MCF 10A (cell line): ENCODE measurements at regions of chr2 and their contacts with region 1.

Region 1: GRCh38 chr2:176096986-176097819 is 2.4 kb upstream of the HOXD12 start:
- DNase-seq: peak; percentile 89
- H3K4me3 Mint-ChIP-seq: peak overlapping the region; percentile 77
- H3K27ac Mint-ChIP-seq: peak overlapping the region; percentile 71
- H3K4me1 Mint-ChIP-seq: peaks cover 13% of the 10 kb centered on the region
- H3K27me3 Mint-ChIP-seq: peaks cover 47% of the 10 kb centered on the region
- CTCF ChIP-seq: peak; percentile 92

Region 2: GRCh38 chr2:175030380-175031271 is 1066.6 kb before region 1 on chr2:
- CTCF ChIA-PET with region 1: interaction called, 9 read pairs
- POLR2A ChIA-PET with region 1: no interaction called
- intact Hi-C with region 1: loop called (anchors 5 kb)
- DNase-seq: peak; percentile 49
- H3K4me3 Mint-ChIP-seq: no peak overlapping the region
- H3K27ac Mint-ChIP-seq: no peak overlapping the region
- H3K4me1 Mint-ChIP-seq: no peaks in the 10 kb centered on the region
- H3K27me3 Mint-ChIP-seq: no peaks in the 10 kb centered on the region
- CTCF ChIP-seq: peak; percentile 28

Region 3: GRCh38 chr2:175251425-175252041 is 845.7 kb before region 1 on chr2:
- CTCF ChIA-PET with region 1: interaction called, 43 read pairs
- POLR2A ChIA-PET with region 1: interaction called, 5 read pairs
- intact Hi-C with region 1: loop called (anchors 1 kb)
- DNase-seq: peak; percentile 63
- H3K4me3 Mint-ChIP-seq: no peak overlapping the region
- H3K27ac Mint-ChIP-seq: no peak overlapping the region
- H3K4me1 Mint-ChIP-seq: no peaks in the 10 kb centered on the region
- H3K27me3 Mint-ChIP-seq: peaks cover 56% of the 10 kb centered on the region
- CTCF ChIP-seq: peak; percentile 48

Region 4: GRCh38 chr2:175366815-175367214 is 730.4 kb before region 1 on chr2:
- CTCF ChIA-PET with region 1: interaction called, 38 read pairs
- POLR2A ChIA-PET with region 1: interaction called, 4 read pairs
- intact Hi-C with region 1: loop called (anchors 1 kb)
- DNase-seq: peak; percentile 68
- H3K4me3 Mint-ChIP-seq: no peak overlapping the region
- H3K27ac Mint-ChIP-seq: no peak overlapping the region
- H3K4me1 Mint-ChIP-seq: no peaks in the 10 kb centered on the region
- H3K27me3 Mint-ChIP-seq: peaks cover 49% of the 10 kb centered on the region
- CTCF ChIP-seq: peak; percentile 73

Region 5: GRCh38 chr2:175621821-175622220 is 475.4 kb before region 1 on chr2:
- CTCF ChIA-PET with region 1: no interaction called
- POLR2A ChIA-PET with region 1: no interaction called
- intact Hi-C with region 1: no loop called
- DNase-seq: peak; percentile 2
- H3K4me3 Mint-ChIP-seq: no peak overlapping the region
- H3K27ac Mint-ChIP-seq: no peak overlapping the region
- H3K4me1 Mint-ChIP-seq: no peaks in the 10 kb centered on the region
- H3K27me3 Mint-ChIP-seq: peaks cover 9% of the 10 kb centered on the region
- CTCF ChIP-seq: no peak

Region 6: GRCh38 chr2:175690113-175690837 is 406.9 kb before region 1 on chr2:
- CTCF ChIA-PET with region 1: interaction called, 30 read pairs
- POLR2A ChIA-PET with region 1: interaction called, 4 read pairs
- intact Hi-C with region 1: loop called (anchors 2 kb)
- DNase-seq: peak; percentile 74
- H3K4me3 Mint-ChIP-seq: no peak overlapping the region
- H3K27ac Mint-ChIP-seq: no peak overlapping the region
- H3K4me1 Mint-ChIP-seq: no peaks in the 10 kb centered on the region
- H3K27me3 Mint-ChIP-seq: peaks cover 44% of the 10 kb centered on the region
- CTCF ChIP-seq: peak; percentile 57

Region 7: GRCh38 chr2:175929850-175930249 is 167.4 kb before region 1 on chr2:
- CTCF ChIA-PET with region 1: no interaction called
- POLR2A ChIA-PET with region 1: no interaction called
- intact Hi-C with region 1: no loop called
- DNase-seq: no peak
- H3K4me3 Mint-ChIP-seq: peak overlapping the region; percentile 11
- H3K27ac Mint-ChIP-seq: peak overlapping the region; percentile 83
- H3K4me1 Mint-ChIP-seq: peaks cover 13% of the 10 kb centered on the region
- H3K27me3 Mint-ChIP-seq: no peaks in the 10 kb centered on the region
- CTCF ChIP-seq: no peak

Region 8: DNA sequence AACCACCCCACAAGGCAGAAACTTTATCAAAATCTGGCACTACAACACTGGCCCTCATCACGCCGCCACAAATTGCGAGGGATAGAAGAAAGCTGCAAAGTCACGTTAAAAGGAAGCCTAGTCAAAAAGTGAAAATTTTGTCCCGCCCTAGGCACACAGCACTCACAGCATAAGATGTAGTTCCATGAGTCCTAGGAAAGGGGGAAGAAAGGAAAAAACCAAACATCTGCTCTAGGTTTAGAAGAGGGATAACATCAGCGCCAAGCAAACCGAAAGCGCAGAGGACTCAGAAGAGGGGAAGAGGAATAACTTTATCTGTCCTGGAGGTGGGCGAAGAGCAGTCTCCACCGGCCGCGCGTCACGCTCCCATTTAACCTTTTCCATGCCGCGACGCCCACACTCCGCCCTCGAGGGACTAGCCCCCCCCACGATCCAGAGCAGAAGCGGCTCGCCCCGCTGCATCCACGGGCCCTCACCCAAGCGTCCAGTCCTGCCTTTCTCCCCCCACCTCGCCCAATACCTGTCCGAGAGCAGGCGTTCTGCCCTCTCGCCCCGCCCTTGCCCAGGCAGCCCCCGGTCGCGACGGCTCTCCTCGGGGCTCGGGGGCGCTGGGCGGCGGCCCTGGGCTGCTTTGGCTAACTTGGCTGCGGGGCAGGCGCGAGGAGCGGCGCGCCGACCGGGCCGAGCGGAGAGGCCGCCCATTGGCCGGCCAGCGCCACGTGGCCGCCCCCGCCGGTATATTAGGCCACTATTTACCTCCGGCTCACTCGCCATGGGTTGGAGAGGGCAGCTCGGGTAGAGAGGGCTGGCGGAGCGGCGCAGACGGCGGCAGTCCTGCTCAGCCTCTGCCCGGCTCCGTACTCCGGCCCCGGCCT is 90.9 kb after region 1 on chr2 and contains the start of gene HOXD1:
- CTCF ChIA-PET with region 1: no interaction called
- POLR2A ChIA-PET with region 1: no interaction called
- intact Hi-C with region 1: no loop called
- DNase-seq: no peak
- H3K4me3 Mint-ChIP-seq: peak within 1 kb of the TSS; percentile 41
- H3K27ac Mint-ChIP-seq: no peak within 1 kb of the TSS
- H3K4me1 Mint-ChIP-seq: no peaks in the 10 kb centered on the region
- H3K27me3 Mint-ChIP-seq: no peaks in the 10 kb centered on the region
- CTCF ChIP-seq: no peak
- total RNA-seq, gene HOXD1: not detected in 2 replicates

Region 9: GRCh38 chr2:176999301-176999700 is 902.1 kb after region 1 on chr2:
- CTCF ChIA-PET with region 1: no interaction called
- POLR2A ChIA-PET with region 1: no interaction called
- intact Hi-C with region 1: no loop called
- DNase-seq: peak; percentile 1
- H3K4me3 Mint-ChIP-seq: no peak overlapping the region
- H3K27ac Mint-ChIP-seq: no peak overlapping the region
- H3K4me1 Mint-ChIP-seq: peaks cover 5% of the 10 kb centered on the region
- H3K27me3 Mint-ChIP-seq: peaks cover 37% of the 10 kb centered on the region
- CTCF ChIP-seq: no peak